ENCODE measurements at regions of chrX and their contacts with region 1.

Region 1: GRCh38 chrX:56978172-56978571 is 17.2 kb downstream of the SPIN3 start:
- DNase-seq: peak; percentile 55
- H3K4me3 Mint-ChIP-seq: no peak overlapping the region
- H3K27ac Mint-ChIP-seq: no peak overlapping the region
- H3K4me1 Mint-ChIP-seq: peaks cover 3% of the 10 kb centered on the region
- H3K27me3 Mint-ChIP-seq: no peaks in the 10 kb centered on the region

Region 2: DNA sequence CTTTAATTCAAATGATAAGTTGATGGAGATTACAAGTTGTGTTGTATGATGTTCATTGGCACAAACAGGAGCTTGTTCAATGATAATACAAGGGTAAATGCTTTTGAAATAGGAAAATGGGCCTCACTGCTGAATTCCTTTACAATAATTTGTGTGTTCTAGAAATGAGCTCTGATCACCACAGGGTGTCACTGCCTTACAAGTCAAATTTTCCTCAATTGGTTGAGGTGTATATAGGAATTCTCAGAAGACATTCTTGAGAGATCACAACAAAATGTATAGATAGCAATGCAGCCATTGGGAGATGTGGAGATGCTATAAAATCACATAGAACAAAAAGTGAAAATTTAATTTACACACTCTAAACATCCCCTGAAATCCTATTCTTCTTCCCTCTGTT is 696.4 kb before region 1 on chrX:
- CTCF ChIA-PET with region 1: no interaction called
- intact Hi-C with region 1: loop called (anchors 1 kb)
- DNase-seq: peak; percentile 32
- H3K4me3 Mint-ChIP-seq: no peak overlapping the region
- H3K27ac Mint-ChIP-seq: no peak overlapping the region
- H3K4me1 Mint-ChIP-seq: peaks cover 10% of the 10 kb centered on the region
- H3K27me3 Mint-ChIP-seq: no peaks in the 10 kb centered on the region

Region 3: GRCh38 chrX:56764153-56764974 is 213.8 kb before region 1 on chrX:
- CTCF ChIA-PET with region 1: interaction called, 14 read pairs
- intact Hi-C with region 1: no loop called
- DNase-seq: peak; percentile 84
- H3K4me3 Mint-ChIP-seq: peak overlapping the region; percentile 66
- H3K27ac Mint-ChIP-seq: peak overlapping the region; percentile 96
- H3K4me1 Mint-ChIP-seq: peaks cover 54% of the 10 kb centered on the region
- H3K27me3 Mint-ChIP-seq: no peaks in the 10 kb centered on the region

Region 4: GRCh38 chrX:56802921-56803849 is 175.0 kb before region 1 on chrX:
- CTCF ChIA-PET with region 1: interaction called, 9 read pairs
- intact Hi-C with region 1: loop called (anchors 1 kb)
- DNase-seq: peak; percentile 71
- H3K4me3 Mint-ChIP-seq: peak overlapping the region; percentile 32
- H3K27ac Mint-ChIP-seq: no peak overlapping the region
- H3K4me1 Mint-ChIP-seq: peaks cover 45% of the 10 kb centered on the region
- H3K27me3 Mint-ChIP-seq: no peaks in the 10 kb centered on the region

Region 5: DNA sequence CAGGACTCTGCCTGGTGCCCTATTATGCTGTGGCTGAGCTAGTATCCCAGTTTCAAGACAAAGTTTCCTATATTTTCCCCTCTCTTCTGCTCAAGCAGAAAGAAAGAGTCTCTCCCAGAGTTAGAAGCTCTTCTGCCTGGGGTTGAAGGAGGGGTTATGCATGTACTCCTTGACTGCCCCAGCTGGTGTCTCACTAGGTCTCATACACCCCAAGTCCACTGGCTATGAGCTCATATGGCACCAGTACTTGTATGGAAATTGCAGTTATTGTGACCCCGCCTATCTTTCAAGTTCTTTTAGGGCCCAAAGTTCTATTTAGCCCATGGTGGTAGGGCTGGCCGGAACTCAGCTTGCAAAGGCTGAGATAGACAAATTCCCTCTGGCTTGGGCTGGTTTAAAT is 117.3 kb before region 1 on chrX:
- CTCF ChIA-PET with region 1: no interaction called
- intact Hi-C with region 1: loop called (anchors 5 kb)
- DNase-seq: no peak
- H3K4me3 Mint-ChIP-seq: no peak overlapping the region
- H3K27ac Mint-ChIP-seq: no peak overlapping the region
- H3K4me1 Mint-ChIP-seq: no peaks in the 10 kb centered on the region
- H3K27me3 Mint-ChIP-seq: no peaks in the 10 kb centered on the region

Measured in activated naive CD4-positive, alpha-beta T cell treated with anti-CD3 and anti-CD28 coated beads for 36 hours (primary cell).